ENCODE measurements at regions of chr10 and their contacts with region 1.

Region 1: DNA sequence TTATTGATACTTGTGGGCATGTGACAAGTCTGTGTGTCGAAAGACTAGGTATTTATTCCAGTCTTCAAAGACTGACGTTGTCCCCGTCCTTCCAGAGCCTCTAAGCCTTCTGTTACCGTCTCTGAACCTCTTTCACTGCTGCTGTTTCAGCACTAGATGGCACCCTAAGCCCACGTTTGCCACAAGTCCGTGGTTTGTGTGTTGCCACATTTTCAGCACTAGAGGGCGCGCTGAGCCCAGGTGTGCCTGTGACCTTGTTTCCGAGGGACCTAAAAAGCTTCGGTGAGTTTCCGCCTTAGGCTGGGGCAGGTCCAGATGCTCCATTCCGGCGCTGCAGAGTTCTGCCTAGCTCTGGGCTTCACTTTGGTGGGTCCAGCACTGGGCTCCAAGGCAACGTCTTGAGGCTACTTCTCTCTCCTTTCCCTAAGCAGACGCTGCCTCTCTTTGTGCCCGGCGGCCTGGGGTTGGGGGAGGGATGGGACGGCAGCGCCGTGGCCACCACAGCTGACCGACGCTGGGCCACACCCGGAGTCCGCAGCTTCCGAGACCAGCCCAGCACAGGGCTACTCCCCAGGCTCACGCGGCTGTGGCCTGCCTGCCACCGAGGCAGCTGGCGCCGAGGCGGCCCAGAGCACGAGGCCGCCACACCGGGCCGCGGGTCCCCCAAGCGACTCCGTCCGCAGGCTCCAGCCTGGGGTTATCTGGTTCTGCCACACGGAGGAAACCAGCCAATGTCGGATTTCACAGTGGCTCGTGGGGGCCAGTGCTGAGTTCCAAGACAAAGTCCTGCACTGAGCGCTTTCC is 520.2 kb downstream of the REEP3 start:
- H3K4me3 Mint-ChIP-seq: peak overlapping the region; percentile 64
- H3K27ac Mint-ChIP-seq: peak overlapping the region; percentile 39
- H3K4me1 Mint-ChIP-seq: peaks cover 28% of the 10 kb centered on the region
- H3K27me3 Mint-ChIP-seq: no peaks in the 10 kb centered on the region

Region 2: GRCh38 chr10:64733980-64734379 is 692.6 kb after region 1 on chr10:
- intact Hi-C with region 1: loop called (anchors 10 kb)
- H3K4me3 Mint-ChIP-seq: no peak overlapping the region
- H3K27ac Mint-ChIP-seq: no peak overlapping the region
- H3K4me1 Mint-ChIP-seq: peaks cover 19% of the 10 kb centered on the region
- H3K27me3 Mint-ChIP-seq: no peaks in the 10 kb centered on the region

Measured in dendritic cell treated with granulocyte-macrophage colony-stimulating factor and Interleukin-4, amounts not matched to agents 40 ng/mL and 50 ng/mL, for 4 days (primary cell).